OCI-LY7 (cell line): ENCODE measurements at regions of chr3 and their contacts with region 1.

Region 1: DNA sequence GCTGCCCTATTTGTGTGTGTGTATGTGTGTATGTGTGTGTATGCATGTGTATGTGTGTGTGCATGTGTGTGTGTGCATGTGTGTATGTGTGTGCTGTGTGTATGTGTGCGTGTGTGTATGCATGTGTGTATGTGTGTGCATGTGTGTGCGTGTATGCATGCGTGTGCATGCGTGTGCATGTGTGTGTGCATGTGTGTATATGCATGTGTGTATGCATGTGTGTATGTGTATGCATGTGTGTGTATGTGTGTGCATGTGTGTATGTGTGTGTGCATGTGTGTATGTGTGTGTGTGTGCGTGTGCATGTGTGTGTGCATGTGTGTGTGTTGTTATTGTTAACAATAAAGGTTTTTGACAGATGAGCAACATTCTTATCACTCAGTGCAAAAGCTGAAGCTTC is 110.8 kb upstream of the HES1 start:
- DNase-seq: no peak
- H3K4me3 ChIP-seq: no peak overlapping the region
- H3K27ac ChIP-seq: no peak overlapping the region
- H3K4me1 ChIP-seq: peaks cover 31% of the 10 kb centered on the region
- CTCF ChIP-seq: no peak

Region 2: GRCh38 chr3:193933451-193933850 is 91.7 kb before region 1 on chr3:
- CTCF ChIA-PET with region 1: no interaction called
- POLR2A ChIA-PET with region 1: interaction called, 11 read pairs
- intact Hi-C with region 1: no loop called
- DNase-seq: no peak
- H3K4me3 ChIP-seq: no peak overlapping the region
- H3K27ac ChIP-seq: no peak overlapping the region
- H3K4me1 ChIP-seq: no peaks in the 10 kb centered on the region
- CTCF ChIP-seq: no peak

Region 3: DNA sequence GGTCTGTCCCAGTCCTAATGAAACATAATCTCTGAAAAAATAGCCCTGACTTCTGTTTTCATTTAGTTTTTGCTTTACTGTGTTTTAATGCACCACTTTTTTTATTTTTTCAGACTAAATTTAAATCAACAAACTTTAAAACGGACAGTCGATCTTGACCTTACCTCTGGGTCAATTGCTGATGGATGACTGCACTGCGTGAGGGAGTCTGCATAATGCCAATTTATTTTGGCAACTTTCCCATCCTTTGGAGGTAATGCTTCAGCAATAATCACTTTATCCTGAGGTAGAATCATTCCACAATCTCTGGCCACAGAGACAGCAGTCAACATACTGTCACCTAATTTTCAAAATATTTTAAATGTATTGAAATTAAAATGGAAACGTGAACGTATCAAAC is 406.4 kb after region 1 on chr3:
- CTCF ChIA-PET with region 1: no interaction called
- POLR2A ChIA-PET with region 1: no interaction called
- intact Hi-C with region 1: no loop called
- DNase-seq: no peak
- H3K4me3 ChIP-seq: no peak overlapping the region
- H3K27ac ChIP-seq: no peak overlapping the region
- H3K4me1 ChIP-seq: no peaks in the 10 kb centered on the region
- CTCF ChIP-seq: no peak

Region 4: DNA sequence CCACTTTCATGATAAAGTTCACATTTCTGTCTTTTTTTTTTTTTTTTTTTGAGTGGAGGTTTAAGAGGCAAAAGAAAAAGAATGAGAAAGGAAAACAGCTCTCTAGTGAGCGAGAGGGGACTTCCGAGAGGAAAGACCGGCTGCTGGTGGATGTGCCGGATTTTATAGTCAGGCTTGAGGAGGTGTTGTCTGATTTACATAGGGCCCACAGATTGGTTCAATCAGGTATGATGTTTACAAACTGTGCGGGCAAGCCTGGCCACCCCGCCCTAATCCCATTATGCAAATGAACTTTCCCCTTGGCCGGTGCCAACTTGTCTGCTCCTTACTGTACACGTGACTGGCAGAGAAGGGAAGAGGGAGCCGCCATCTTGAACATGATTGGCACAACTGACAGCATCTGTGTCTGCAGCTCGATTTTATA is 705.2 kb after region 1 on chr3:
- CTCF ChIA-PET with region 1: no interaction called
- POLR2A ChIA-PET with region 1: no interaction called
- intact Hi-C with region 1: no loop called
- DNase-seq: peak; percentile 74
- H3K4me3 ChIP-seq: no peak overlapping the region
- H3K27ac ChIP-seq: no peak overlapping the region
- H3K4me1 ChIP-seq: peaks cover 30% of the 10 kb centered on the region
- CTCF ChIP-seq: no peak